Ascending aorta (tissue), 2 donors: ENCODE measurements at regions of chr5 and their contacts with region 1.

Region 1: GRCh38 chr5:52787600-52788504 is at the starts of genes ITGA1 and PELO:
- DNase-seq: peak; percentile 43 to 93
- H3K4me3 ChIP-seq: peak within 1 kb of the TSS; percentile 80 to 84
- H3K27ac ChIP-seq: peak within 1 kb of the TSS; percentile 90 to 97
- H3K4me1 ChIP-seq: peaks cover 0 to 28% of the 10 kb centered on the region in 2 donors
- H3K27me3 ChIP-seq: no peaks in the 10 kb centered on the region
- CTCF ChIP-seq: peak; percentile 21 to 70 (median 51)
- total RNA-seq, gene ITGA1: 42.7 TPM
- total RNA-seq, gene PELO: 39.1 TPM

Region 2: DNA sequence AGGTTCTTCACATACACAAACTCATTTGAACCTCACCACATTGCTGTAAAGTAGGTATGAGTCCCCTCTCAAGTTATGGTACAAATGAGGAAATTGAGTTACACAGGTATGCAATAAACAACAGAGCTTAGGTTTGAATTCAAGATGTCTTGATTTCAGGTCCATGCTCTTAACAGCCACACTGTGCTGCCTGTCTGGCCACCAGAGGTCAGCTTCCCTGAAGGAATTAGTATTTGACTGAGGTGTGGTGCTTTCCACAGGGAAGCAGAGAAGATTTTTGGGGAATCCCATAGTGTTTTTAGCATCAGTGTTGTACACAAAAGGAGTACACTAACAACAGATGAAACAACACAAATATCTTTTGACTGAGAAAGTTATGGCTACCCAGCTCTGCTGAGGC is 94.6 kb before region 1 on chr5:
- intact Hi-C with region 1: loop called (anchors 5 kb)
- DNase-seq: no peak
- H3K4me3 ChIP-seq: no peak overlapping the region
- H3K27ac ChIP-seq: no peak overlapping the region
- H3K4me1 ChIP-seq: peaks cover 0 to 29% of the 10 kb centered on the region in 2 donors
- H3K27me3 ChIP-seq: no peaks in the 10 kb centered on the region
- CTCF ChIP-seq: peak; percentile 41 to 67 (median 54)

Region 3: GRCh38 chr5:52804981-52805380 is 17.1 kb after region 1 on chr5:
- intact Hi-C with region 1: no loop called
- DNase-seq: no peak
- H3K4me3 ChIP-seq: peak overlapping the region; percentile 83
- H3K27ac ChIP-seq: peak overlapping the region; percentile 96 to 100
- H3K4me1 ChIP-seq: peaks cover 5 to 62% of the 10 kb centered on the region in 2 donors
- H3K27me3 ChIP-seq: no peaks in the 10 kb centered on the region
- CTCF ChIP-seq: no peak

Region 4: GRCh38 chr5:52837068-52837467 is 49.2 kb after region 1 on chr5:
- intact Hi-C with region 1: loop called (anchors 5 kb)
- DNase-seq: peak in 1 of 2 donors; percentile 77
- H3K4me3 ChIP-seq: peak overlapping the region; percentile 16 to 32
- H3K27ac ChIP-seq: peak overlapping the region; percentile 80 to 83
- H3K4me1 ChIP-seq: peaks cover 0 to 16% of the 10 kb centered on the region in 2 donors
- H3K27me3 ChIP-seq: no peaks in the 10 kb centered on the region
- CTCF ChIP-seq: peak; percentile 22 to 49 (median 35)

Region 5: DNA sequence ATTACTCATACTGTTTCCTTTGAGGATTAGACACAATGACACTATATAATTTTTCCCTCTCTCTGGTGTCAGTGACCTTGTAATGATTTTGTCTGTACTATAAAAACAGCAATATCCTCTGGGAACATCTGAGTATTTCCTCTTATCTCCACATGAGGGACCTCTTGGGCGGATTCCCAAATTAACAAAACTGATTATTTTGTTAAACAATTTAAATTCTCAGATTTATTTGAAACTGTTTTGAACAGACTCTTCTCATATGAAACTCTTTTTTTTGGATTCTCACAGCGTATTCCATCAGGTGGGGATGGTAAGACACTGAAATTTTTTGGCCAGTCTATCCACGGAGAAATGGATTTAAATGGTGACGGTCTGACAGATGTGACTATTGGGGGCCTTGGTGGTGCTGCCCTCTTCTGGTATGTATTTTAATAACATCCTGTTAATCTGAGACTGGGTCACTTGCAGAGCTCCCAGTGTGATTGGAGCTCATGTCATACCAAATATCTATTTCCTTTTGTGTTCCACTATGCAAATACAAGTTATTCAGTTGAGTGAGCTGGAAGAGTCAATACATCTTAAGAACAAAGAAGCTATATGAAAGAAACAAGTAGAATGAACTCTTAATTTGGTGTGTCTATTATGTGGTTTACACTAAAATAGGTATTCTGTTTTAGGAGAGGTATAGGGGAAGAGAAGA is 127.5 kb after region 1 on chr5:
- intact Hi-C with region 1: loop called (anchors 1 kb)
- DNase-seq: no peak
- H3K4me3 ChIP-seq: no peak overlapping the region
- H3K27ac ChIP-seq: peak overlapping the region in 1 of 2 donors; percentile 3
- H3K4me1 ChIP-seq: peaks cover 0 to 12% of the 10 kb centered on the region in 2 donors
- H3K27me3 ChIP-seq: no peaks in the 10 kb centered on the region
- CTCF ChIP-seq: peak; percentile 75 to 84 (median 75)

Region 6: DNA sequence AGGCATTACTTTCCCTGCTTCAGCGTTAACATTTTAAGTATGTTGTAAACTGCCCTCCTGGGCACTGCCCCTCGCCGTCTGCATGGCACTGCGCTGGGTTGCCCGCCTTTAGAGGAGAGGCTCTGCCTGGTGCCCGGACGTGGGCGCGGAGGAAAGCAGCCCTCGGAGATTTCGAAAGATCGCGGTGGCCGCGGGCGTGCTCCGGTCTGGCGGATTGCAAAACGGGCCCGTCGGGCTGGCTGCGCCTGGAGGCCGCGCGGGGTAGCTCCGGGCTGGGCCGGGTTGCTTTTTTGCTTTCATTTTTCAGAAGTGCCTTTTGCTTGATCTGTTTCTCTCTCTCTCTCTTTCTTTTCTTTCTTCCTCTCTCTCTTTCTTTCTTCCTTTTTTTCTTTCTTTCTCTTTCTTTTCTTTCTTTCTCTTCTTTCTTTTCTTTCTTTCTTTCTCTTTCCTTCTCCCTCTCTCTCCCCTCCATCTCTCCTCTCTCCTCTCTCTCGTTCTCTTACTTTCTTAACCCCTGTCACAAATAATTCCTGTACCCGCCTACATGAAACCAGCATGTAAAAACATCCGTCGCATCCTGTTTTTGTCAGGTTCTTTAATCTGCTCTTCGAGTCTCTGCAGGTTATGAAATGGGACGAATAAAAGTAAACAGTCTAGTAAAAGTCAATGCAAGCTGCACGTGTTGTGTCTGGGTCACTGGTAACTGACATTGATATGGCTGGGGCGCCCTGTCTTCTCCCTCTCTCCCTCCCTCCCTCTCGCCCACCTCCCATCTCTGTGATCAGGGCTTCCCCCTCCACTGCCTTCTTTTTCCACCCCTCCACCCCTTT is 694.2 kb after region 1 on chr5:
- intact Hi-C with region 1: loop called (anchors 10 kb)
- DNase-seq: peak; percentile 13 to 89
- H3K4me3 ChIP-seq: peak overlapping the region; percentile 63 to 98
- H3K27ac ChIP-seq: peak overlapping the region; percentile 53 to 56
- H3K4me1 ChIP-seq: peaks cover 0 to 5% of the 10 kb centered on the region in 2 donors
- H3K27me3 ChIP-seq: no peaks in the 10 kb centered on the region
- CTCF ChIP-seq: peak in 2 of 3 experiments; percentile 19 to 27